ENCODE measurements at regions of chr22 and their contacts with region 1.

Region 1: DNA sequence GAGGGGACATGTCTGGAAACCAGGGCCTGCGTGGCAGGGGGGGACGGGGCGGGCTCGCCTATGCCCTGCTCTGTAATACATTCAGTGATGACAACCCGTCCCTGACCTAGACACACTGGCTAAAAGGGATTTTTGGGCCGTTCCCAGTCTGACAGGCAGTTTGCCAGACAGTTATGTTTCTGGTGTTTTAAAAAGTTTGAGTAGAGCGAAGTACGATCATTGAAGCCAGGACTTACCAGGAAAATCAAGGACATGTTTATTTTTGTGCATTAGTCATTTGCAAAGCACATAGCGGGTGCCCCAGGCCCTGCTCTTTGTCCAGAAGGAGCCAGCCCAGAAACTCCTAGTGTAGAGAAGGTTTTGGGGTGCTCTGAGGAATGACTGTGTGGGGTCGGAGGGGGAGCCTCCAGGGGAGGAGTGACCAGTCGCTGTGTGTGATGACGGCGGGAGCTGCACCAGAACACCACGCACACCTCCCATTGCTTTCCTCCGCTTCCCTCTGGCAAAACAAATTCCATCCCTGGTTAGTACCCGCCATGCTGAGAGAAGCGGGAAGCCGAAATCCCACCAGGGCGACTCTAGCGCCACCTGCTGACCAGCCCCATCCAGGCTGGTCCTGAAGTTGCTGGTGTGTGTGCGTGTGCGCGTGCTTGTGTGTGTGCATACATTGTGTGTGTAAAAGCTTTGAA is 50.8 kb downstream of the FBLN1 start:
- DNase-seq: peak; percentile 59
- H3K4me3 ChIP-seq: peak overlapping the region; percentile 8; the same call in 1 of the 2 replicates
- CTCF ChIP-seq: peak; percentile 92

Region 2: DNA sequence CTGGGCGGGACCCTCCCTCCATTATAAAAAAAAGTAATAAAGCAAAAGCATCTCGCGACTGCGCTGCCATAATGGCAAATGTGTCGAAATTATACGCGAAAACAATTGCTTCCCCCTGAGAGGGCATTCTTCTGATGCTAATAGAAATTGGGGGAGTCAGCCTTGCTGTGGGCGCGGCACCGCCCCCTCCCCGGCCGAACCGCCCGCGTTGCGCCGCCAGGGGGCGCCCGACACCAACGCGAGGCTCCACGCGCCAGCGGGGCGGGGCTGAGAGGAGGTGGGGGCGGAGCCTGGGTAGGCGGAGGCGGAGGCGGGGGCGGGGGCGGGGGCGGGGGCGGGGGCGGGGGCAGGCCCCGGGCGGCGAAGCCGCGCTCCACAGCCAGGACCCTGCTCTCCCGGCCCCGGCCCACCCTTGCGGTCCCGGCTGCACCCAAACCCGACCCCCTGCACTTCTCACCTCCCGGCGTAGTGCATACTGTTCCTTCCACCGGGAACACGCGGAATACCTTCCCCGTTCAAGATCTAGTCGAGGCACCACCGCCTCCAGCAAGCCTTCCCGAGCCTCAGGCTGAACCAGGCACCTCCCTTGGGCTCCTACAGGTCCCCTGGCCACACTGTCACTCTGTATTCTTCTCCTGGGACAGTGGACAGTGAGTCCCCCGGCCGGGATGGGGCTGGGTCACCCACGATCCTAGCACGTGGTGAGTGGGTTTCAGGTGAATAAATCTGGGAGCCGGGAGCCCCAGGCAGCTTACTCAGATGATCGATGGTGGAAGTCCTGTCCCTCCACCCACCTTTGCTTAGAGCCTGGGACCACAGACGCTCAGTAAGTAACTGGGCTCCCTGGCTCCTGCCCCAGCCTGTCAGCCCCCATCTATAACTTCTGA is 284.3 kb before region 1 on chr22:
- CTCF ChIA-PET with region 1: interaction called, 53 read pairs
- POLR2A ChIA-PET with region 1: interaction called, 3 read pairs
- DNase-seq: no peak
- H3K4me3 ChIP-seq: peak overlapping the region; percentile 67
- CTCF ChIP-seq: peak; percentile 82

Region 3: DNA sequence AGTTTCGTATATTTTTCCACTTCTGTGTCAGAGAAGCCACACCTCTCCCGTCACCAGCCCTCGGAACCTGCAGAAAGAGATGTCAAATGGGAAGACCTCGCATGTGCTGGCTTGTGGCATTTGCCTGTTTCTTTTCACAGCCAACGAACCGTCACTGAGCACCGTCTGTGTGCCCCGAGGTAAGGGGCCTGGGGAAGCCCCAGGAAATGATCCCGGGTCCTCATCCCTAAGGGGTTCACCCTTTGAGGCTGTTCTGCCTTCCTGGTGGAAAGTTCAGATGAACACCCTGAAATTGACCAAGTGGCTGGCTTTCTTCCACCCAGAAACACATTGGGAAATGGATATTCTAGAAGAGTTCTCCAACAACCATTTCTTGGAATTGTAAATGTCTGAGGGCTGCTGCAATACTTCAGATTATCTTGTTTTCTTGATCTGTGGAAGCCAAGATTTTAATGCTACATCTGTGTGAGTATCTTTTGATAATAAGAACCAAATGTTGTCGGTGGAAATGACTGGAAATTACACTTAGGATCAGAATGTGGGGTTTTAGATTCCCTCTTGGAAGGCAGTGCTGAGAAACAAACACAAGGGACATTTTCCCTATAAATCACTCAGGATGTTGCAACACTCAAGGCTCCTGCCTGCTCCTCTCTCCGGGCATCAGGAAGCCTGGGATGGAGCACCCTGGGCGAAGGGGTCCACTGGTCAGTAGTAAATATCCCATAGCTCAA is 102.4 kb before region 1 on chr22:
- CTCF ChIA-PET with region 1: interaction called, 286 read pairs
- POLR2A ChIA-PET with region 1: interaction called, 3 read pairs
- DNase-seq: peak; percentile 92
- H3K4me3 ChIP-seq: no peak overlapping the region
- CTCF ChIP-seq: no peak

Region 4: DNA sequence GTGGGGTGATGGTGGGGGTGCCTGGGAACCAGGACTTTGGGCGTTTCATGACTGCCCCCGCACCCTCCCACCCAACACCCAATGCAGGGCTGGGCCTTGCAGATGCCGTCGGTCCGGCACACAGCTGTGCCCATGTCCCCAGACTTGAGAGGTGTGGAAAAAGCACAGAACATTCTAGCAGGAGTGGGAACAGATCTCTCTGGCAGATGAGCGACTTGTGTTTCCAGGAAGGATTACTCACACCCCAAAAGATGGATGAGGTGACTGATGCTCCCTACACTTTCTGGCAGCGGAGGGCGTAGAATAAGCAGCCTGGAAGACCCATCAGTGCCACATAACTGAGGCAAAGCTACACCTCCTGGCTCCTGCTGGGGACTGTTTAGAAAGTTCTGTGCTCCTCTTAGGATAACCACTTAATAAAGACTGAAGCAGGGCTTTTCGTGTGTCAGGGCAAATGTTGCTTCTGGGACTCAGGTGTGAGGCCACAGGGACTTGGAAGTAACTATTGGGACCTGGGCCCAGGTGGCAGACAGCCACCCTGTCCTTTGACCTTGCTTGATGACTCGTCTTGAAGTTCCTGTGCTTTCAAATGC is 26.6 kb before region 1 on chr22:
- CTCF ChIA-PET with region 1: interaction called, 18 read pairs
- POLR2A ChIA-PET with region 1: no interaction called
- DNase-seq: no peak
- H3K4me3 ChIP-seq: no peak overlapping the region
- CTCF ChIP-seq: no peak

Region 5: GRCh38 chr22:45564349-45565032 is 11.0 kb after region 1 on chr22:
- CTCF ChIA-PET with region 1: interaction called, 52 read pairs
- POLR2A ChIA-PET with region 1: no interaction called
- DNase-seq: no peak
- H3K4me3 ChIP-seq: no peak overlapping the region
- CTCF ChIP-seq: no peak

Region 6: GRCh38 chr22:45903355-45904149 is 350.1 kb after region 1 on chr22:
- CTCF ChIA-PET with region 1: no interaction called
- POLR2A ChIA-PET with region 1: no interaction called
- DNase-seq: peak; percentile 16
- H3K4me3 ChIP-seq: peak overlapping the region; percentile 2; the same call in 1 of the 2 replicates
- CTCF ChIP-seq: no peak

Region 7: DNA sequence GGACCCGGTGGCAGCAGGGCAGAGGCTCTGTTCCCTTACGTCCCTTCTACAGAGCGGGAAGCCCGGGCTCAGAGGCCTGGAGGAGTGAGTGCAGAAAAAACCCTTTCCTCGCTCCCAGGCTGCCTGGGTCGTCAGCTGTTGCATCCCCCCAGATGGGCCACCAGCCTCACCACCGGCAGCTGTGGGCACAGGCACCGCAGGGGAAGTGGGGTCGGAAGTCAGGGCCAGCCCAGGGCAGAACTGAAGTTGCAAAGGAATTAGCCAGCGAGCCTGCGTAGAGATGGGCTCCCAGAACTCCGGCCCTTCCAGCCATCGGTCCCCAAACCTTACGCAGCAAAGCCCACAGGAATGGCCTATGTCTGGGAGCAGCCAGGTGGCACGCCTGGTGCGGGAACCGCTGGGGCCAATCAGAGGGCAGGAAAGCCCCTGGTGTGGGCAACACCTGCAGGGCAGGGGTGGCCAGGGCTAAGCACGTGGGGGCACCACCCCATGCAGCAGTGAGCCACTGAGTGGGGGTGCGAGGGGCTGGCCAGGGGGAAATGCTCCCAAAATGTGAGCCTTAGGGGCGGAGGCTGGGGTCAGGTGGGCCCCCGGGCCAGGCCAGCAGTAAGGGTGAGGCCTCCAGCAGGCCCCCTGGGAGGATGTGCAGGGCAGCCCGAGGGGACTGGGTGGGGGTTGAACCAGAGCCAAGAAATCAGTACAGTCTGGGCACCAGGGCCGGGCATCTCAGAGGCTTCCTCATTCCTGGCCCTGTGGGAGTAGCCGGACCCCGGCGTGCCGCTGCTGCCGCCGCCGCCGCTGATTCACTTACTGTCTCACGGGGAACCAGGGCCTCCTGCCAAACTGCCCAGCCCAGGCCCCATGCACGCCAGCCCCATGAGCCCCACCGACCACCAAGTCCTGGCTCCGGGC is 365.2 kb after region 1 on chr22:
- CTCF ChIA-PET with region 1: no interaction called
- POLR2A ChIA-PET with region 1: no interaction called
- DNase-seq: no peak
- H3K4me3 ChIP-seq: no peak overlapping the region
- CTCF ChIP-seq: no peak

Region 8: GRCh38 chr22:46087336-46088277 is 534.1 kb after region 1 on chr22:
- CTCF ChIA-PET with region 1: no interaction called
- POLR2A ChIA-PET with region 1: no interaction called
- DNase-seq: no peak
- H3K4me3 ChIP-seq: peak overlapping the region; percentile 30
- CTCF ChIP-seq: no peak

Measured in AG04449 (cell line).